ENCODE measurements at regions of chr9 and their contacts with region 1.

Region 1: DNA sequence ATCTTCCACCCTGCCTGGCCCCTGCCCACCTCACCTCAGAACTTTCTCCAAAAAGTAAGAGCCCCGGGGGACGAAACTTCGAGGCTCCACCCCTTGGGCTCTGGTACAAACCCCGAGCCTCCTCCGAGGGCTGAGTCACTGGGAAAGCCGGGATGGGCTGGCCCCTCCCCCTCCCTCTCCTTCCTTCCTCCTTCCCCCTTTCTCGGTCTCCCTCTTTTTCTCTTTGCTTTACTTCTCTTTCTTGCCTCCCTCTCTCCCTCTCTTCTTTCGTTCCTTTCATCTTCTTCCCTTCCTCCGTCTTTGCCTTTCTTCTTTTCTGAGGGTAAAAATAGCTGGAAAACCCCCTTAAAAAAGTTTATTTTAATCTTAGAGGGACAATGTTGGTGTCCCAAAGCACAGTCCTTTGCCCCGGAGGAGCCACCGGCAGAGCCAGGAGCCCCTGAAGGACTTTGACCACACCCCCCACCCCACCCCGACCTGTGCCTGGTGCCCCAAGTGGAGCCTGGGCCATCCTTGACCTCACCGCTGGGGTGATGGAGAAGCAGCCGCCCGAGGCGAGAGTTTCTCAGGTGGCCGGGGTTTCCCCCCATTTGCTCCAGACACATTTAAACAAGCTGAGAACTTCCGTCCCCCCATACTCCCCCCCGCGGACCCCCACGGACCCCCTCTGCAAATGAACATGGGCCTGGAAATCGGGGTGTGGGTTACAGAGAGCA is 5.7 kb upstream of the NOTCH1 start:
- DNase-seq: peak; percentile 74

Region 2: GRCh38 chr9:136189394-136190236 is 361.9 kb before region 1 on chr9:
- in situ Hi-C with region 1: no loop called
- DNase-seq: no peak

Region 3: DNA sequence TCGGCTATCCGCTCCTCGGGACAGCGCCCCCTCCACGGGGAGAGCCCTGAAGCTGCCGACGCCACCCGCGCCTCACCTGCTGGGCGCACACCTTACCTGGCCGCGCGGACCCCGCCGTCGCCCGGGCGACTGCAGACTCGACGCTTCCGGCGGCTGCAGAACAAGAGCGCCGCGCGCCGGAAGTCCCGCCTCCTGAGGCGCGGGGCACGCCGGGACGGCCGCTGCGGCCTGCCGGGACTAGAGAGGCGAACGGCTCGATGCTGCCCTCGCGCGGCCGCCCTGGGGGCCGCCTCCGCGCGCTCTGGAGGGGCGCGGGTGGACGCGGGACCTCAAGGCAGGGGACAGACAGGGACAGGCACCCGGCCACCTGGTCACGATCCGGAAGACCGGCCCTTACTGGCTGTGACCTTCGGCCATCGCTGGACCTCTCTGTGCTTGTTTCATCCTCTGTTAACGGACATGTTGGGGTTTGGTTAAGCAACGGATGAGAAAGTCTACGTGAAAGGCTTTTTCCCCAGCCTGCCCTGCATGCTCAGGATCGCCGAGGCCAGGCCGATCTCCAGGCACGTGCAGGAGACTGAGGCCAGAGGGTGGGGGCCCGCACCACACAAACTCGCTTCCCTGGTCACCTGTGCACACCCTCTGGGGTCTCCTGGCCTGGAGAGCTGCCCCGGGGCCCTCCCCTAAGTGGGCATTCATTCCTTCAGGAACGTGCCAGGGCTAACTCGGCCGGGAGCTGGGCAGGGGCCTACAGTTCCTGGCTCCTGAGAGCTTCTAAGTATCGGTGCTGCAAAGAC is 151.3 kb before region 1 on chr9 and contains the start of gene SNAPC4:
- in situ Hi-C with region 1: no loop called
- DNase-seq: peak; percentile 84

Region 4: DNA sequence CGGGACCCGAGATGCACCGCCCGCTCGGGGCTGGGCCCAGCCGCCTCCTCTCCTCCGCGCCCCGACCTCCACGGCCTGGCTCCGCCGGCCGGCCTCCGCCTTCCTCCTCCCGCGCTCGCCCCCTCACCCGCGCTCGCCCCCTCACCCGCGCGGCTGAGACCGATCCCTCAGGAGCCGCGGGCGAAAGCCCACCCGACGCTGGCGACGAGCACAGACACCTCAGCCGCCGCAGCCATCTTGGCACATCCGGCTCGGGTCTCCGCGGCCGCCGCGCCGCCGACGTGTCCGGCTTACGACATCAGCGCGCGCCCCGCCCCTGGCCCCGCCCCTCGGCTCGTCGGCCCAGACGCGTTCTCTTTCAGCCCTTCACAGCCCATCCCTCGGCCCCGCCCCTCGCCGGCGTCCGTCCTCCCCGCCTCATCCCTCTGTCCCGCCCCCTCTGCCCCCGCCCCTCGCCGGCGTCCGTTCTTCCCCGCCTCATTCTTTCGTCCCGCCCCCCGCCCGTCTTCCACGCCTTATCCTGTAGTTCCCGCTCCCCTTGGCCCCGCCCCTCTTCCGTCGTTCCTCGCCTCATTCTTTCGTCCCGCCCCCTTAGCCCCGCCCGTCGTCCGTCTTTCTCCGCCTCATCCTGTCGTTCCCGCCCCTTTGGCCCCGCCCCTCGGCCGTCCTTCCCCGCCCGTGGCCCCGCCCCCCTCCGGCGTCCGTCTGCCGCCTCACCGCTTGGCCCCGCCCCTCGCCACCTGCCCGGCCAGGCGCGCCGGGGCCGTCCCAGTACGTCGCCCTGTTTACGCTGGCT is 68.6 kb before region 1 on chr9 and contains the start of gene SEC16A:
- in situ Hi-C with region 1: loop called (anchors 10 kb)
- DNase-seq: peak; percentile 91

Region 5: DNA sequence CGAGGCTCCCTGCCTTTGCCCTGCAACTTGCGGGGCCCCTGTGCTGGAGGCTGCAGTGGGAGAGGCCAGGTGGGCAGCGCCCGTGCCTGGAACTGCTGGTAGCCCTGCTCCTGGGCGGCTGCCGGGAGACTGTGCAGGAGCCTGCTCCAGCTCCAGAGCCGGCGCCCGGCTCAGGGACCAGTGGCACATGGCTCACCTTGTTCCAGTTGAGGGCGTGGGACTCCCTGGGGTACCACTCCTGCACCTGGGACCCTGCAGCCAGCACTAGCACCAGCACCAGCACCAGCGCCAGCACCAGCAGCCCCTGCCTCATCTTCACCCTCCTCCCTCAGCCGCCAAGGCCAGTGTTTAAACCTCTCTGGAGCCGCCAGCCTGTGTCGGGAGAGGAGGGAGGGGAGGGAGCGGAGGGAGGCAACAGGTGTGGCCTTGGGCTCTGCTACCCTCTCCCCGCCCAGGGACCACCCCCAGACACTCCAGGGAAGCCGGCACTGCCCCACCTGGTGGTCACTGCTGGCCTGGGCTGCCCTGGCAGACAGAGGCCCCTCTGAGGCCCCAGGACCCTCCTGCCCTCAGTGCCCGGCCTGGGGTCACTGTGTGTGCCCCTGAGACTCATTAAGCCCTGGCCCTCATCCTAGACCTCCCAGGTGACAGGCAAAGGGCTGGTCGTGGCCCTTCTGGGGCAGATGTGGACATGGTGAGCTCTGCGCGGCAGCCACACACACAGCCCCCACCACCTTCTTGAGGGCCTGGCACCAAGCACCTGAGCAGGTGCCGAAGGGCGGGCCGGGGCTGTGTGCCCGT is 191.2 kb after region 1 on chr9 and contains the start of gene LCN10:
- in situ Hi-C with region 1: no loop called
- DNase-seq: peak; percentile 29